ENCODE measurements at regions of chr3 and their contacts with region 1.

Region 1: DNA sequence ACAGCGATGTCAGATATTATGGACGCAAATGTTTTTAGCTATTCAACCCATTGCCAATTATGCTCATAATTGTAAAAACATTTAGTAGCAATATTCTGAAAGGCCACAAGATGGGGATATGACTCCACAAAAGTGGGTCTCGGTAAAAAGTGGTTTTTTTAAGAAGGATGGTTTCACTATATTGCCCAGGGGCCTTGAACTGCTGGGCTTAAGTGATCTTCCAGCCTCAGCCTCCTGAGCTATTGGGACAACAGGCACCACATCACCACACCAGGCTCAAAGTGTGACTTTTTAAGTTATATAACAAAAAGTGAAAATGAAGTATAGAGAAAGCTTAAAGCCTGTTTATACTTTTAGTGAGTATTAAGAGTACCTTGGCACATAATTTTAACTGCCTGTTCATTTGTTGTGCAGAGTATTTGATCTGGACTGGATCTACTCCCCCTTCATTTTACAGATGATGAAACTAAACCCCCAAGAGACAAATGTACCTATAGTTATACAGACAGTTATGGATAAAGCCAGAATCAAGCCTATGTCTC is 9.4 kb downstream of the NAA50 start:
- DNase-seq: peak in 4 of 9 experiments; percentile 21 to 83 (median 54)
- ATAC-seq: peak; percentile 91
- H3K4me3 ChIP-seq: no peak overlapping the region
- H3K4me3 Mint-ChIP-seq: no peak overlapping the region
- H3K27ac ChIP-seq: peak overlapping the region in 1 of 2 experiments; percentile 53
- H3K27ac Mint-ChIP-seq: peak overlapping the region; percentile 84
- H3K4me1 ChIP-seq: peaks cover 16% of the 10 kb centered on the region
- H3K4me1 Mint-ChIP-seq: peaks cover 59% of the 10 kb centered on the region
- H3K27me3 ChIP-seq: no peaks in the 10 kb centered on the region
- H3K27me3 Mint-ChIP-seq: no peaks in the 10 kb centered on the region
- CTCF ChIP-seq: peak; percentile 73

Region 2: GRCh38 chr3:113166719-113167492 is 569.7 kb before region 1 on chr3:
- CTCF ChIA-PET with region 1: no interaction called
- POLR2A ChIA-PET with region 1: no interaction called
- intact Hi-C with region 1: no loop called
- DNase-seq: no peak
- ATAC-seq: no peak
- H3K4me3 ChIP-seq: no peak overlapping the region
- H3K4me3 Mint-ChIP-seq: no peak overlapping the region
- H3K27ac ChIP-seq: no peak overlapping the region
- H3K27ac Mint-ChIP-seq: no peak overlapping the region
- H3K4me1 ChIP-seq: no peaks in the 10 kb centered on the region
- H3K4me1 Mint-ChIP-seq: no peaks in the 10 kb centered on the region
- H3K27me3 ChIP-seq: no peaks in the 10 kb centered on the region
- H3K27me3 Mint-ChIP-seq: peaks cover 3% of the 10 kb centered on the region
- CTCF ChIP-seq: no peak

Region 3: GRCh38 chr3:113277941-113278593 is 458.6 kb before region 1 on chr3:
- CTCF ChIA-PET with region 1: no interaction called
- POLR2A ChIA-PET with region 1: no interaction called
- intact Hi-C with region 1: no loop called
- DNase-seq: no peak
- ATAC-seq: no peak
- H3K4me3 ChIP-seq: no peak overlapping the region
- H3K4me3 Mint-ChIP-seq: no peak overlapping the region
- H3K27ac ChIP-seq: no peak overlapping the region
- H3K27ac Mint-ChIP-seq: no peak overlapping the region
- H3K4me1 ChIP-seq: no peaks in the 10 kb centered on the region
- H3K4me1 Mint-ChIP-seq: peaks cover 7% of the 10 kb centered on the region
- H3K27me3 ChIP-seq: no peaks in the 10 kb centered on the region
- H3K27me3 Mint-ChIP-seq: peaks cover 2% of the 10 kb centered on the region
- CTCF ChIP-seq: no peak

Region 4: DNA sequence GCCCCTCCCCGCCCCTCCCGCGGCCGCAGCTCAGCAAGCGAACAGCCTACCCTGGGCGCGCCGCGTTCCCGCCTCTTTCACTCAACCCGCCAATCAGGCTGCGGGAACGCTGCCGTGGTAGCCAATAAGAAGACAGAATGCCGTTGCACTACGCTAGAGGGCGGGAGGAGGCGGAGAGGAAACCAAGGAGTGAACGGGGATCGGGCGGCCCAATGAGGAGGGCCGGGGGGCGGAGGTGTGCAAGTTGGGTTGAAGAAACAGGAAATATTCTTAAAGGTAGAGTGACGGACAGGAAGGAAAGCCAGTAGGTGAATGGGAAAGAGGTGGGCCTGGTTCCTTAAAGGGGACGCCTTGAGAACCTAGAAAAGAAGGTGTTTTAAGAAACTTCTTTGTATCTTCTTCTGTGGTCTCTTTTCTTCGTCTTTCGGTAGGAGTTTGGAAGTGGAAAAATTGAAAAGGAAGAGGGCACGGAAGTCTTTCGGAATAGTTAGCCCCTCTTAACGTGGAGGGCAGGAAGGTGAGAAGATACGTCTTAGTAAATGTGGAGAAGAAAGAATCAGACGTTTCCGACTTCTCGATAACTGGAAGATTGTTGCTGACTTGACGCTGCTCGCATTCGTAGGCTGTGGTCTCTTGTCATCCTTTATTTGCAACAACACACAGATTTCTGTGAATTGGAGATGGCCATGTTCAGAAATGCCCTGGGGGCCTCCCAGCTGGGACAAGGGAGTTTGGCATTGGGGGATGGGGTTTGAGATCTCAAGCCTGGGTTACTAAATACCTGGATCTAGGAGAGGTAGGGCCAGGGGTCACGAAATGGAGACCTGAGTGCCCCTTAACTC is 39.7 kb before region 1 on chr3:
- CTCF ChIA-PET with region 1: interaction called, 13 read pairs
- POLR2A ChIA-PET with region 1: interaction called, 3 read pairs
- intact Hi-C with region 1: loop called (anchors 1 to 2 kb)
- DNase-seq: peak; percentile 96 to 100 (median 99)
- ATAC-seq: peak; percentile 84
- H3K4me3 ChIP-seq: peak overlapping the region; percentile 69 to 86
- H3K4me3 Mint-ChIP-seq: no peak overlapping the region
- H3K27ac ChIP-seq: peak overlapping the region; percentile 88 to 89
- H3K27ac Mint-ChIP-seq: no peak overlapping the region
- H3K4me1 ChIP-seq: peaks cover 32% of the 10 kb centered on the region
- H3K4me1 Mint-ChIP-seq: peaks cover 28% of the 10 kb centered on the region
- H3K27me3 ChIP-seq: no peaks in the 10 kb centered on the region
- H3K27me3 Mint-ChIP-seq: no peaks in the 10 kb centered on the region
- CTCF ChIP-seq: no peak

Region 5: GRCh38 chr3:113838631-113839209 is 102.1 kb after region 1 on chr3 and contains the start of gene GRAMD1C:
- CTCF ChIA-PET with region 1: interaction called, 3 read pairs
- POLR2A ChIA-PET with region 1: no interaction called
- intact Hi-C with region 1: loop called (anchors 1 to 2 kb)
- DNase-seq: peak; percentile 65 to 93 (median 85)
- ATAC-seq: peak; percentile 99
- H3K4me3 ChIP-seq: peak within 1 kb of the TSS; percentile 47 to 53
- H3K4me3 Mint-ChIP-seq: peak within 1 kb of the TSS; percentile 80
- H3K27ac ChIP-seq: no peak within 1 kb of the TSS
- H3K27ac Mint-ChIP-seq: no peak within 1 kb of the TSS
- H3K4me1 ChIP-seq: no peaks in the 10 kb centered on the region
- H3K4me1 Mint-ChIP-seq: peaks cover 9% of the 10 kb centered on the region
- H3K27me3 ChIP-seq: no peaks in the 10 kb centered on the region
- H3K27me3 Mint-ChIP-seq: no peaks in the 10 kb centered on the region
- CTCF ChIP-seq: peak; percentile 81
- total RNA-seq, gene GRAMD1C: 0.65 to 1.00 TPM

Region 6: DNA sequence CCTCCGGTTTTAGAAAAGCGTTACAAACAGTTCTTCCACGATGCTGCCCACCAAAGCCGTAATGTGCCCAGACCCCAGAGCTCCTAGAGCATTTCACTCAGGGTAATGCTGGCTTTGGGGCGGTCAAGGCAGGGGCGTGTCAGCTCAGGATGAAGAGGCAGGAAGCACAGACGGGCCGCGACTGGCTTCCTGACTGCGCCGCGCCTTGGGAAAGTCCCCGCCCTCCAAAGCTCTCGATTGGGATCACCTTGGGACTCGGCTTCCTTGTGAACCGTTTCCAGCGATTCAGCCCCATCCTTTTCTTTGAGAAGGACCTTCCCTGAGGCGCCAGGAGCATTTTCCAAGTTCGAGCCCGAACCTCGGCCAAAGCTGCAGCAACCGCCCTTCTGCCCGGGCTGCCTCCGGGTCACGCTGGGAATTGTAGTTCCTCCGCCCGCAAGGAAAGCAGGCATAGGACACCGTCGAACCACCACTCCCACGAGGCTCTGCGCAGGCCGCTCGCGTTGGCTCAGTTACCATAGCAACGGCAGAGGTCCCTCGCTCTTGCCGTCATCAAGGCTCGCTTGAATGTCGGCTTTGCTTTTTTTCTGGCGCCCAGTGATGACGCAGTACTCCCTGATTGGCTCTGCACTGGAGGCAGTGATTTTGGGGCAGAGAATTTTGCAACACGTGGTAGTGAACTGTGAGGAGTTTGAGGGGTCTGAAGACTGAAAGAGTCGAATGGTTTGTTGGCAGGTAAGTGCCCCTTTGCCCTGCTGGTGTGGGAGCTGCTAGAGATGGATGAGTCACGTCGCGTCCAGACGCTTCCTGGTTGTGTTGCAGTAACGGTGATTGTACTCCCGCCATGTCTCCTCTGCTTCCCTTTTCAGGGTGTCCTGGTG is 319.8 kb after region 1 on chr3 and contains the starts of genes CCDC191 and QTRT2:
- CTCF ChIA-PET with region 1: no interaction called
- POLR2A ChIA-PET with region 1: no interaction called
- intact Hi-C with region 1: loop called (anchors 2 kb)
- DNase-seq: peak; percentile 94 to 100 (median 98)
- ATAC-seq: peak; percentile 95
- H3K4me3 ChIP-seq: peak within 1 kb of the TSS; percentile 70 to 96
- H3K4me3 Mint-ChIP-seq: peak within 1 kb of the TSS; percentile 94
- H3K27ac ChIP-seq: peak within 1 kb of the TSS; percentile 84 to 97
- H3K27ac Mint-ChIP-seq: peak within 1 kb of the TSS; percentile 98
- H3K4me1 ChIP-seq: peaks cover 20% of the 10 kb centered on the region
- H3K4me1 Mint-ChIP-seq: peaks cover 53% of the 10 kb centered on the region
- H3K27me3 ChIP-seq: no peaks in the 10 kb centered on the region
- H3K27me3 Mint-ChIP-seq: no peaks in the 10 kb centered on the region
- CTCF ChIP-seq: no peak
- total RNA-seq, gene CCDC191: 2.8 to 2.9 TPM
- total RNA-seq, gene QTRT2: 31.7 to 36.6 TPM

Region 7: DNA sequence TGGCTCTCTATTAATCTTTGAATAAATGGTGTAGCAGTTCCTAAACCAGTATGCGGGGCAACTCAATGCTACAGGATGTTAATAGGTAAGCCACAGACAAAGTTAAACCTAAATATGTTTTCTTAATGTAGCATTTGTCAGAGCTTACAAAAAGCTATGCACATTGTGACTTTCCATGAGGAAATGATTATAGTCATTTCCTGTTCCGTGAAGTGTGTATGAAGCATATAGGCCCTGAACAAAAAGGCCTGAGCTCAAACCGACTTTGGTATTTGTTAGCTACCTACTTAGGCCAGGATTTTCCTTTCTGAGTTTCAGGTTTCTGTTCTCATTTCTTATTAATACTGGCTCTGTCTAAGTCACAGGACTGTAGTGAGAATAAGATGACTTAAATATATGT is 486.5 kb after region 1 on chr3:
- CTCF ChIA-PET with region 1: no interaction called
- POLR2A ChIA-PET with region 1: no interaction called
- intact Hi-C with region 1: loop called in 1 of 2 experiments (anchors 5 kb)
- DNase-seq: peak in 2 of 9 experiments; percentile 60 to 83
- ATAC-seq: peak; percentile 70
- H3K4me3 ChIP-seq: no peak overlapping the region
- H3K4me3 Mint-ChIP-seq: no peak overlapping the region
- H3K27ac ChIP-seq: peak overlapping the region; percentile 37 to 78
- H3K27ac Mint-ChIP-seq: peak overlapping the region; percentile 89
- H3K4me1 ChIP-seq: peaks cover 79% of the 10 kb centered on the region
- H3K4me1 Mint-ChIP-seq: peaks cover 89% of the 10 kb centered on the region
- H3K27me3 ChIP-seq: no peaks in the 10 kb centered on the region
- H3K27me3 Mint-ChIP-seq: no peaks in the 10 kb centered on the region
- CTCF ChIP-seq: no peak